CD8-positive, alpha-beta T cell (primary cell): ENCODE measurements at regions of chr1 and their contacts with region 1.

Region 1: DNA sequence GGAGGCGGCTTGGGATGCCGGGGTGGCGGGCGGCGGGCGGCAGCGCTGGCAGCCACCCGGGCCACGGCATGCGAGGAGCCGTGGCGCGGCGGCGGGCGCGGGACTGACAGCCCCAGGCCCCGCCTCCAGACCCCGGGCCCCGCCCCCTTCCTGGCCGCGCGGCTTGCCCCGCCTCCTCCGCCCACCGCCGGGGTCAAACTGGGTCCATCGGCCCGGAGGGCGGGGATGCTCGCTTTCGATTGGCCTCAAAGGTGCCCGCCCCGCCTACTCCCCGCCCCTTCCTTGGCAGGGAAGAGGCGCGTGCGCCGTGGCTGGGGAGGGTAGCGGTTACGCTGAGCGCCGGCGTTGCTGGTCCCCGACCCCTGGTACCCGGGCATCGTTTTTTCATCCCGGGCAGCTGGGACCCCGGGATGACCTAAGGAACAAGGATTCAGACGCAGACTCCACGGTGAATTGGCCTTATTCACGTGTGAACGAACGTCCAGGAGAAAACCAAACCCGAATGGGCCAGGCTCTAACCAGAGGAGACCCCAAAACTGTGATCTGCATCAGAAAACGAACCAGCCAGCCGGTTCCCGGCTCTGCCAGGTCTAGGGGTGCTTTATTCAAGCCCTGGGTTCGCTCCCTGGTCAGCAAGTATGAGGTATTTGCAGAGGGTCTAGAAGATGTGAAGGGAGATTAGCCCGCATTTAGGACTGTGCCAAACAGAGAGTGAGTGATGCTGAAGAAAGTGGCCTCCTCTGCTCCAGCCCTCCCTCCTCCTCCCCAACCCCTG is 117.2 kb upstream of the GUCA2B start:
- DNase-seq: peak; percentile 96 to 99 (median 98)
- ATAC-seq: peak; percentile 94
- H3K4me3 ChIP-seq: peak overlapping the region; percentile 55 to 79
- H3K4me3 Mint-ChIP-seq: peak overlapping the region; percentile 78
- H3K27ac ChIP-seq: peak overlapping the region in 1 of 2 experiments; percentile 51
- H3K27ac Mint-ChIP-seq: peak overlapping the region; percentile 75
- H3K4me1 ChIP-seq: peaks cover 29% of the 10 kb centered on the region
- H3K4me1 Mint-ChIP-seq: peaks cover 42% of the 10 kb centered on the region
- H3K27me3 ChIP-seq: no peaks in the 10 kb centered on the region
- H3K27me3 Mint-ChIP-seq: no peaks in the 10 kb centered on the region
- CTCF ChIP-seq: no peak

Region 2: GRCh38 chr1:41573785-41574713 is 462.0 kb before region 1 on chr1:
- CTCF ChIA-PET with region 1: no interaction called
- POLR2A ChIA-PET with region 1: no interaction called
- intact Hi-C with region 1: loop called (anchors 2 to 5 kb)
- DNase-seq: peak; percentile 64 to 88 (median 81)
- ATAC-seq: peak; percentile 97
- H3K4me3 ChIP-seq: no peak overlapping the region
- H3K4me3 Mint-ChIP-seq: no peak overlapping the region
- H3K27ac ChIP-seq: no peak overlapping the region
- H3K27ac Mint-ChIP-seq: no peak overlapping the region
- H3K4me1 ChIP-seq: peaks cover 9% of the 10 kb centered on the region
- H3K4me1 Mint-ChIP-seq: peaks cover 8% of the 10 kb centered on the region
- H3K27me3 ChIP-seq: no peaks in the 10 kb centered on the region
- H3K27me3 Mint-ChIP-seq: no peaks in the 10 kb centered on the region
- CTCF ChIP-seq: peak; percentile 85

Region 3: DNA sequence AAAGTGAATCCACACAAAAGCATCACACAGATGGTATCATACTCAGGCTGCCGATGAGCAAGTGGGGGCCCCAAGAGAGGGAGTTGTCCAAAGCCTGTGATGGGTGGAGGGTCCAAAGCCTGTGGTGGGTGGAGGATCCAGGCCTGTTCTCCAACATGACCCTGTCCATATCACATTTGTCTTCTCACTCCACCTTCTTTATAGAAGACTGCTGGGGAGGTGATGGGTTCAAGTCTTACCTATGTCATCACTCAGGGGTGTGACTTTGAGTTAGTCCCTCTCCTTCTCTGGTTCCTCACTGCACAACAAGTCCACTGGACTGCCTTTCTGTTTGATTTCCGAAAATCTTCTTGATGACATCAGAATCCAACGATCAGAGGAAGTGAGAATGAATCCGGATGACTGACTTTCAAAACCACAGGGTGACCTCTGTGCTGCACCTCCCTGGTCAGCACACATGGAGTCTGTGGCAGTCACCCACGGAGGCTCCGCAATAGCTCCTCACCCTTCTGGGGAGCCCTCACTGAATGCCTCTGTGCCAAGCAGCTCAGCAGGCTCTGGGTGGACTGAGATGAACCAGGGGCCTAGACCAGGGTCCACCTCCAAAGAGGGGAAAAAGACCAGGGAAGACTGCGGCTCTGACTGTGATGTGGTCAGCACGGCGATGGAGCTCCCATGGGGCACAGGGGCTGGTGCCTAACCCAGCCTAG is 284.1 kb before region 1 on chr1:
- CTCF ChIA-PET with region 1: no interaction called
- POLR2A ChIA-PET with region 1: no interaction called
- intact Hi-C with region 1: loop called (anchors 2 to 5 kb)
- DNase-seq: peak in 1 of 9 experiments; percentile 38
- ATAC-seq: no peak
- H3K4me3 ChIP-seq: no peak overlapping the region
- H3K4me3 Mint-ChIP-seq: no peak overlapping the region
- H3K27ac ChIP-seq: no peak overlapping the region
- H3K27ac Mint-ChIP-seq: peak overlapping the region; percentile 55
- H3K4me1 ChIP-seq: peaks cover 47% of the 10 kb centered on the region
- H3K4me1 Mint-ChIP-seq: peaks cover 53% of the 10 kb centered on the region
- H3K27me3 ChIP-seq: no peaks in the 10 kb centered on the region
- H3K27me3 Mint-ChIP-seq: no peaks in the 10 kb centered on the region
- CTCF ChIP-seq: no peak

Region 4: DNA sequence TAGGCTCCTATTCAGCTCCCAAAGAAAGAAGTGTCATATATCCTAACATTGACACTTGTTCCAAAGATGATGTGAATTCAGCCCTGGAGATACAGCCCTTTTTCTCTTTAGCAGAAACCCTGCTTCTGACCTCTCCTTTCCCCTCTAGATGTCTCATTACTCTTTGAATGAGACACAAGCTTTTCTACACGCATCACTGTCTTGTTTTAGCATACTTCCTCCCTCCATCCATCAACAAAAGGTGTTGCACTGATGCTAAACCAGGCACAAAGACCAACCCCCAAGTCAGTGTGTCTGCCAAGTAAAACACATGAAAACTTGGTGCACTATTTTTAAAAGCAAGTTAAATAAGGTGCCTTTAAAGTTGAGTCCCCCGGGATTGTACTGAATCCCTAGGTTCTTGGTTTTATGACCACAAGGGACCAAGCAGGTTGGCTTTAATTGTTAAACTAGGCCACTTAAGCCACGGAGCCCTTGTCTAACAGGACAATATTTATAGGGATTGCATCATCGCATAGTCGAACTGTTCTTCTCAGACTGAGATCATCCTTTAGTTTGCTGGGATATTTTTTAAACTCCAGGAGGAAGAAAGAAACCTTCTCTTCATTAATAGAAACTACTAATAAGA is 16.2 kb after region 1 on chr1:
- CTCF ChIA-PET with region 1: interaction called, 5 read pairs
- POLR2A ChIA-PET with region 1: no interaction called
- intact Hi-C with region 1: loop called in 1 of 2 experiments (anchors 1 kb)
- DNase-seq: no peak
- ATAC-seq: no peak
- H3K4me3 ChIP-seq: no peak overlapping the region
- H3K4me3 Mint-ChIP-seq: no peak overlapping the region
- H3K27ac ChIP-seq: no peak overlapping the region
- H3K27ac Mint-ChIP-seq: no peak overlapping the region
- H3K4me1 ChIP-seq: no peaks in the 10 kb centered on the region
- H3K4me1 Mint-ChIP-seq: peaks cover 7% of the 10 kb centered on the region
- H3K27me3 ChIP-seq: peaks cover 2 to 7% of the 10 kb centered on the region in 2 experiments
- H3K27me3 Mint-ChIP-seq: peaks cover 64% of the 10 kb centered on the region
- CTCF ChIP-seq: no peak

Region 5: GRCh38 chr1:42766741-42767509 is 730.9 kb after region 1 on chr1 and contains the starts of genes C1orf50 and P3H1:
- CTCF ChIA-PET with region 1: no interaction called
- POLR2A ChIA-PET with region 1: no interaction called
- intact Hi-C with region 1: loop called in 1 of 2 experiments (anchors 5 kb)
- DNase-seq: peak; percentile 99 to 100 (median 99)
- ATAC-seq: peak; percentile 92
- H3K4me3 ChIP-seq: peak within 1 kb of the TSS; percentile 73 to 97
- H3K4me3 Mint-ChIP-seq: no peak within 1 kb of the TSS
- H3K27ac ChIP-seq: peak within 1 kb of the TSS; percentile 87 to 88
- H3K27ac Mint-ChIP-seq: peak within 1 kb of the TSS; percentile 97
- H3K4me1 ChIP-seq: peaks cover 40% of the 10 kb centered on the region
- H3K4me1 Mint-ChIP-seq: peaks cover 36% of the 10 kb centered on the region
- H3K27me3 ChIP-seq: no peaks in the 10 kb centered on the region
- H3K27me3 Mint-ChIP-seq: no peaks in the 10 kb centered on the region
- CTCF ChIP-seq: no peak
- total RNA-seq, gene C1orf50: 16.1 to 20.3 TPM
- total RNA-seq, gene P3H1: 19.6 to 22.5 TPM

Region 6: GRCh38 chr1:43396059-43396458 is 1360.0 kb after region 1 on chr1:
- CTCF ChIA-PET with region 1: no interaction called
- POLR2A ChIA-PET with region 1: no interaction called
- intact Hi-C with region 1: no loop called
- DNase-seq: no peak
- ATAC-seq: no peak
- H3K4me3 ChIP-seq: no peak overlapping the region
- H3K4me3 Mint-ChIP-seq: no peak overlapping the region
- H3K27ac ChIP-seq: no peak overlapping the region
- H3K27ac Mint-ChIP-seq: peak overlapping the region; percentile 32
- H3K4me1 ChIP-seq: peaks cover 4% of the 10 kb centered on the region
- H3K4me1 Mint-ChIP-seq: peaks cover 45% of the 10 kb centered on the region
- H3K27me3 ChIP-seq: no peaks in the 10 kb centered on the region
- H3K27me3 Mint-ChIP-seq: no peaks in the 10 kb centered on the region
- CTCF ChIP-seq: no peak